ENCODE measurements at regions of chr6 and their contacts with region 1.

Region 1: DNA sequence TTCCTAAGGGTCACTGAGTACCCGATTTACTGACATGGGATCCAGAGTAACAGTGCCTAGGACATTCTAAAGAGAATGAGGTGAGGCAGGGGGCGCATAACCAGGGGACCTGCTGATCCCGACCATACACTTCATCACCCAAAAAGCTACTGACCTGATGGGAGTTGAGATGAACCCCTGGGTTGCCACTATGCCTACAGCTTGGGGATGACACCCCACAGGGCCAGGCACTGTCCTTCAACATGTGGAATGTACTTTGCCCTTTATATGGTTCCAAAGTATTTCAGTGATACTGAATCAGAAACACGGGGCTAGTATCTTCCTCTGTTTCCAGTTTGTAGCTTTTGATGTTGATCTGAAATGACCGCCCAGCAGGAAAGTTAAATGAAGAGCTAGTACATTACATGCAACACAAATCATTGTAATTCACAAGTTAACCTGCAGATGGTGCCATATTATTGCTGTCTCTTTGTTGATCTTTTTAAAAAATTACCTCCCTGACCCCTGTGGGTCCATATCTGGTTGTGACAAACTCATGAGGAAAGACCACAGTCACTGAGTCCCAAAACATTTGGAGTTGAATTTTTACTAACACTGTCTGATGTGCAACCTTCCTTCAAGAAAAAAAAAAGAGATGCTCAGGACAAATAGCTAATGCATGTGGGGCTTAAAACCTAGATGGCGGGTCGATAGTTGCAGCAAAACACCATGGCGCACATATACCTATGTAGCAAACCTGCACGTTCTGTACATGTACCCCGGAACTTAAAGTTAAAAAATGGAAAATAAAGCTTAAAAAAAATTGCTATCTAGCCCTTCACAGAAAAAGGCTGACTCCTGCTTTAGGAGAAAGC is 42.7 kb upstream of the GCNT2 start:
- DNase-seq: no peak
- ATAC-seq: peak in 1 of 2 donors; percentile 49

Region 2: DNA sequence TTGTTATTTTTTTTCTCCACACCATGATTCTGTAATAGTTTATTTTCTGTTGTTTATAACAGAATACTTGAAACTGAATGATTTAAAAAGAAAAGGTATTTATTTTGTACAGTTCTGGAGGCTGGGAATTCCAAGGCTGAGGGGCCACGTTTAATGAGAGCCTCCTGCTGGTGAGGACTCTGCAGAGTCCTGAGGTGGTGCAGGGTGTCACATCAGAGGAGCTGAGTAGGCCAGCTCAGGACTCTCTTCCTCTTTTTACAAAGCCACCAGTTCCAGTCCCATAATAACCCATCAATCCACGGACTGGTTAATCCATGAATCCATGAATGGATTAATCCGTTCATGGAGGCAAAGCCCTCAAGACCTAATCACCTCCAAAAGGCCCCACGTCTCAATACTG is 135.1 kb before region 1 on chr6:
- intact Hi-C with region 1: no loop called
- DNase-seq: no peak
- ATAC-seq: no peak

Region 3: GRCh38 chr6:10800829-10801535 is 322.6 kb after region 1 on chr6:
- intact Hi-C with region 1: loop called (anchors 2 to 10 kb)
- DNase-seq: peak; percentile 39
- ATAC-seq: peak; percentile 77 to 89

Region 4: DNA sequence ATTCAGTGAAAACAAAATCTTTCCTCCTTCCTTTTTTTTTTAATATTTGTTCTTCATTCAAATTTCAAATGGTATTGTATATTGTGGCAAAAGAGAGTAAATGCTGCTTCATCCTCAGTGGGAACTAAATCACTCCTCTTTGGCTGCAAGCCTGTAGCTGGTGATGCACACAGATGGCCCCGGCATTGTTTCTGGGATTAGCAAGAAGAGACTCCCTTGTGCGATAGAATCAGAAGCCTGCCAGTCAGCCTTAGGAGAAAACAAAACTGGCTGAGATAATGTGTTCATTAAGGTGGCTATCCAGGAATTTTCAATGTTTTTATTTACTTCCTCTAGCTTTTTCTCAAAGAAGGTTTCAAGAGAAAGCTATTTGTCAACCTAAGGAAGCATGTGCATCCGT is 586.4 kb after region 1 on chr6:
- intact Hi-C with region 1: loop called in 1 of 2 experiments (anchors 10 kb)
- DNase-seq: no peak
- ATAC-seq: no peak